Endothelial cell of umbilical vein (primary cell): ENCODE measurements at regions of chr17 and their contacts with region 1.

Region 1: GRCh38 chr17:78716814-78717393 is 65.2 kb downstream of the CYTH1 start:
- DNase-seq: peak; percentile 57
- H3K4me3 ChIP-seq: peak overlapping the region in 2 of 3 experiments; percentile 18 to 34
- H3K27ac ChIP-seq: no peak overlapping the region
- H3K4me1 ChIP-seq: peaks cover 35% of the 10 kb centered on the region
- H3K27me3 ChIP-seq: no peaks in the 10 kb centered on the region
- CTCF ChIP-seq: no peak
- POLR2A ChIP-seq: no peak

Region 2: GRCh38 chr17:78736526-78737079 is 19.7 kb after region 1 on chr17:
- CTCF ChIA-PET with region 1: interaction called, 9 read pairs
- POLR2A ChIA-PET with region 1: no interaction called
- dilution Hi-C with region 1: no loop called
- intact Hi-C with region 1: loop called (anchors 1 kb)
- DNase-seq: peak; percentile 79
- H3K4me3 ChIP-seq: peak overlapping the region; percentile 47 to 77 (median 54)
- H3K27ac ChIP-seq: peak overlapping the region; percentile 83
- H3K4me1 ChIP-seq: peaks cover 29% of the 10 kb centered on the region
- H3K27me3 ChIP-seq: no peaks in the 10 kb centered on the region
- CTCF ChIP-seq: peak in 1 of 2 donors; percentile 23
- POLR2A ChIP-seq: no peak